CD4-positive, alpha-beta memory T cell (primary cell): ENCODE measurements at regions of chr12 and their contacts with region 1.

Region 1: DNA sequence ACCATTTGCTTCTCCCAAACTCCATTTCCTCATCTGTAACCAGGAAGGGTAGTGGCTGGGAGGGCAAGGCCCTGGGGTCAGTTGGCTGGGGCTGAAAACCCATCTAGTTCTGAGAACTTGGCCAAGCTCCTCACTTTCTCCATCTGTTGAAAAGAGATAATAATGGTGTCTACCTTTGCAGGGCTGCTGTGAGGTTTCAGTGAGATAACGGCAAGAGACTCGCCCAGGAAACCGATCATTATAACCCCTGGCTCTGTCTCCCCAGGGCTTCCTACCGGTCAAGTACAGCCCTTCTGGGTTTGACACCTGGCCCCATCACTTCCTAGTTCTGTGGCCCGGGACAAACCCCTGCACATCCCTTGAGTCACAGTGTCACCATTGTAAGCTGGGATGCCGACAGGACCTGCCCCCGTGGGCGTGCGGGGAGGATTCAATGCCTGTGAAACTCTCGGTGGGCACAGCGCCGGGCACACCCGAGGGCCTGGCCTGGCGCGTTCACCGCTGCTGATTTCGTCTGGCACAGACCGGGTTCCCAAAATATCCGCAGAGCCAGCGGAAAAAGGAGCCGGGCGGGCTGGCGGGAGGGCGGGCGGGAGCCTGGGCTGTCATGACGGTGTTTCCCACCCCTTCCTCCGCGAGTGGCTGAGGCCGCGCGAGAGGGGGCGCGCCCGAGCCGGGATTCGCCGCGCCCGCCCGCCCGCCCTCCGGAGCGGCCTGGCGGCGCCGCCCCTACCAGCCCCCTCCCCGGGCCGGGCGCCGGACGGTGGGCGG is 4.4 kb downstream of the KMT5A start:
- DNase-seq: peak; percentile 76 to 85 (median 79)
- H3K4me3 ChIP-seq: peak overlapping the region; percentile 71 to 84
- H3K4me3 Mint-ChIP-seq: peak overlapping the region; percentile 86 to 92 (median 88)
- H3K27ac ChIP-seq: peak overlapping the region; percentile 70
- H3K27ac Mint-ChIP-seq: peak overlapping the region; percentile 85 to 96 (median 92)
- H3K4me1 ChIP-seq: peaks cover 45% of the 10 kb centered on the region
- H3K4me1 Mint-ChIP-seq: peaks cover 18 to 57% (median 45%) of the 10 kb centered on the region in 4 donors
- H3K27me3 ChIP-seq: no peaks in the 10 kb centered on the region
- H3K27me3 Mint-ChIP-seq: no peaks in the 10 kb centered on the region

Region 2: GRCh38 chr12:123436017-123436964 is 47.9 kb after region 1 on chr12 and contains the start of gene RILPL2:
- CTCF ChIA-PET with region 1: interaction called, 4 read pairs
- POLR2A ChIA-PET with region 1: interaction called, 7 read pairs
- intact Hi-C with region 1: loop called (anchors 2 kb)
- DNase-seq: peak; percentile 92 to 97 (median 94)
- H3K4me3 ChIP-seq: peak within 1 kb of the TSS; percentile 79 to 95
- H3K4me3 Mint-ChIP-seq: peak within 1 kb of the TSS; percentile 93 to 97 (median 95)
- H3K27ac ChIP-seq: peak within 1 kb of the TSS; percentile 98
- H3K27ac Mint-ChIP-seq: peak within 1 kb of the TSS; percentile 88 to 99 (median 96)
- H3K4me1 ChIP-seq: peaks cover 52% of the 10 kb centered on the region
- H3K4me1 Mint-ChIP-seq: peaks cover 23 to 63% (median 42%) of the 10 kb centered on the region in 4 donors
- H3K27me3 ChIP-seq: no peaks in the 10 kb centered on the region
- H3K27me3 Mint-ChIP-seq: no peaks in the 10 kb centered on the region
- total RNA-seq, gene RILPL2: 11.6 to 11.9 TPM

Region 3: GRCh38 chr12:123905319-123905925 is 517.1 kb after region 1 on chr12:
- CTCF ChIA-PET with region 1: no interaction called
- POLR2A ChIA-PET with region 1: no interaction called
- intact Hi-C with region 1: no loop called
- DNase-seq: peak; percentile 61 to 73 (median 65)
- H3K4me3 ChIP-seq: no peak overlapping the region
- H3K4me3 Mint-ChIP-seq: no peak overlapping the region
- H3K27ac ChIP-seq: no peak overlapping the region
- H3K27ac Mint-ChIP-seq: peak overlapping the region in 1 of 7 donors; percentile 47
- H3K4me1 ChIP-seq: no peaks in the 10 kb centered on the region
- H3K4me1 Mint-ChIP-seq: peaks cover 8 to 14% (median 10%) of the 10 kb centered on the region in 4 donors
- H3K27me3 ChIP-seq: no peaks in the 10 kb centered on the region
- H3K27me3 Mint-ChIP-seq: peaks cover 8 to 9% of the 10 kb centered on the region in 2 donors